ENCODE measurements at regions of chr5 and their contacts with region 1.

Region 1: DNA sequence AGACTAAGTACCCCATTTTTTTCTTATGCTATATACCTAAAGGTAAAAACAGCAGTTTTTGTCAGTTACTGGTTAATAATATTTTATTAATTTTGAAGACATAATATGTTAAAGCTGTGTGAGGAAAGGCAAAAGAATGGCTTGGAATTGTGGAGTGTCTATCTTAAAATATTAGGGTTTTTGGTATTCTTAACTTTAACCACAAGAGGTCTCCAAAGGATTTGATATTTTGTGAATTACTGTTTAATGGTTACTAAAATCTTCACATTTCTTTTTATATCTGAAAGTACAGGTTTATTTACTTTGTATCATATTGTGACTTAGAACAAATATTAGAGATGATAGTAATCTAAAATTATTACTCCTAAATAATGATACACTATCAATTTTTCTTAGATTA is 32.0 kb upstream of the DHFR start:
- DNase-seq: peak; percentile 40
- ATAC-seq: no peak
- H3K4me3 ChIP-seq: no peak overlapping the region
- H3K27ac ChIP-seq: no peak overlapping the region
- H3K4me1 ChIP-seq: no peaks in the 10 kb centered on the region
- H3K27me3 ChIP-seq: no peaks in the 10 kb centered on the region
- CTCF ChIP-seq: peak; percentile 40

Region 2: GRCh38 chr5:80782626-80783025 is 95.9 kb after region 1 on chr5:
- CTCF ChIA-PET with region 1: no interaction called
- POLR2A ChIA-PET with region 1: no interaction called
- intact Hi-C with region 1: no loop called
- DNase-seq: no peak
- ATAC-seq: no peak
- H3K4me3 ChIP-seq: no peak overlapping the region
- H3K27ac ChIP-seq: no peak overlapping the region
- H3K4me1 ChIP-seq: peaks cover 10% of the 10 kb centered on the region
- H3K27me3 ChIP-seq: no peaks in the 10 kb centered on the region
- CTCF ChIP-seq: no peak

Region 3: DNA sequence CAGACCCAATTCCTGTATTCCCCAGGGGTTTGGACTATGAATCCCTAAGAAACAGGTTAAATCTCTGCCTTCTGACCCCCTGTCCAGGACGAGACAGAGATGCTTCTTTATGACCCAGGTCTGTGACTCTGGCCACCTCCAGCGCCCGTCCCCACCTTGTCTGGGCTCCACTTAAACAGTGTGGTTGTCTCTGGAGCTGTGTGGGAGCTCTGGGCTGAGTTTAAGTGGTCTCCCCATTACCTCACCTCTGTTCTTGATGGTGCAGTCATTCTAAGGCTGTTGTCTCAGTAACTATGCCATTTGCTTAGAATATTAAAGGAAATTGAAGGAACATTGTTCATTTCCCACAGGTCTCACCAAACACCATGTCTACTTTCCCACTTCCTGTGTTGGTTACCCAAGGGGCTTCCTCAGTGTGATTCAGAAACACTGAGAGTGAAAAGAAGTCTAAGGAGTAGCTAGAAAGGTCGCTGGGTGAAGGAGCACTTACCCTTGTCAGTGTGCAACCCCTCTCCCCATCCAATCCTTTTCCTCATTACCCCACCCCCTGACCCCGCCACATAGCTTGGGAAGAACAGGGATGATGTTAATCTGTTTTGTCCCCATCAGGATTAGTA is 418.6 kb after region 1 on chr5:
- CTCF ChIA-PET with region 1: no interaction called
- POLR2A ChIA-PET with region 1: no interaction called
- intact Hi-C with region 1: loop called (anchors 2 kb)
- DNase-seq: no peak
- ATAC-seq: no peak
- H3K4me3 ChIP-seq: no peak overlapping the region
- H3K27ac ChIP-seq: no peak overlapping the region
- H3K4me1 ChIP-seq: no peaks in the 10 kb centered on the region
- H3K27me3 ChIP-seq: peaks cover 8% of the 10 kb centered on the region; the same call in 1 of the 2 replicates
- CTCF ChIP-seq: no peak

Region 4: DNA sequence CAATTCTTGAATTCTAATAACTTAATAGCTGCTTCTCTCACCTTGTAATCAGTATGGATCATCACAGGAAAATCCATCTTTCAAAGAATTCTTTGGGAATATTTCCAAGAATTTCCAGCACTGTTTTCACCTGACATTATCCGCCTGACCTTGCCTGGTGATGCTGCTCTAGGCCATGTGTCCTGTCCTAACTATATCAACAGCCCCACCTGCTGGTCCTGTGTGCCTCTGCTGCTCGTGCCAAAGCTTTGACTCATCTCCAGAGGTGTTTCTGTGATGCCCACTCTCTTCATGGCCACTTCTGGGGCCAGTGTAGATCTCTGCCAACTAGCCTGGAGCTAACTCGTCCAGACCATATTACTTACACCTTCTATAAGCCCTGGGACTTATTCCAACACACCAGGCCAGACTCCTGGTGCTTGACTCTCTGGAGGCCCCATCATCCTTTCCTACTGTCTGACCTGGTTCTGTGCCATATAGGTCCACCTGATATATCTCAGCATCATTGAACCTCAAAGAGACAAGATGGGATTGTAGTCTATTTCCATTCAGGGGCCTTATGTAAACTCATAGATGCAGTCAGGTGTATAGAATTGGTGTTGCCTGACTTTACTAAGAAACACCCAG is 478.8 kb after region 1 on chr5:
- CTCF ChIA-PET with region 1: no interaction called
- POLR2A ChIA-PET with region 1: no interaction called
- intact Hi-C with region 1: loop called (anchors 2 kb)
- DNase-seq: peak; percentile 75
- ATAC-seq: peak; percentile 98
- H3K4me3 ChIP-seq: no peak overlapping the region
- H3K27ac ChIP-seq: no peak overlapping the region
- H3K4me1 ChIP-seq: no peaks in the 10 kb centered on the region
- H3K27me3 ChIP-seq: no peaks in the 10 kb centered on the region
- CTCF ChIP-seq: peak; percentile 81

Region 5: DNA sequence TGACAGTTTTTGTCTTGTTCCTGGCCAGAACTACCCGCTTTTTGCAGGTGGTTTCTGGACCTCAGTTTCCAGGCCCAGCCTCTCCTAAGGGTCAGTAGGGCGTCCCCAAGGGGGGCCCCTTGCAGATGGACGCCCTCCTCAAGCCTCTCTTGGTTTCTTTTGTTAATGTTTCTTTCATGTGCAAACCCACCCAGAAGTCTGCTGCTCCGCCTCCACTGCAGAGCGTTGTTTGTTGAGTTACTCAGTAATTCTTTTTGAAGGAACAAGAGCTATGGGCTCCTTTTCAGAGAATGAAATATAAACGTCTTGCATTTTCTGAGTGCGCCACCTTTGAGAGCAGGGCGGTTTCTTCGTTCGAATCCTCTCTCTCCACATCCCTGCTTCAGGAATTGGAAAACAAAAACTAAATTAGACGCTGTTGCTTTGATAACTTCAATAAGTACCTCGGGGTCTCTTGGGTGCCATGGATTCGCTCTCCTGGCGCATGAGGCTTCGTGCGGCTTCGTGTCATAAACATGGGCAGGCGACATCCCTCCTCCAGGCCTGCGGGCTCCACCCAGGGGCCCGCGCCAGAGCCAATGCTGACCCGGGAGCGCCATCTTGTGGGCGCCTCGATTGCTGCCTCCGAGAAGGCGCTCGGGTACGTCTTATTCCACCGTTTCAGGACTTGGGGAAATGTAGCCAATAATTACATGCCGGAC is 508.0 kb after region 1 on chr5:
- CTCF ChIA-PET with region 1: no interaction called
- POLR2A ChIA-PET with region 1: no interaction called
- intact Hi-C with region 1: loop called (anchors 1 kb)
- DNase-seq: peak; percentile 80
- ATAC-seq: peak; percentile 99
- H3K4me3 ChIP-seq: no peak overlapping the region
- H3K27ac ChIP-seq: no peak overlapping the region
- H3K4me1 ChIP-seq: no peaks in the 10 kb centered on the region
- H3K27me3 ChIP-seq: 0 out of 2 replicates have a peak, but pooled peaks cover 3% of the 10 kb centered on the region
- CTCF ChIP-seq: peak; percentile 91

Region 6: GRCh38 chr5:81288021-81288433 is 601.3 kb after region 1 on chr5:
- CTCF ChIA-PET with region 1: no interaction called
- POLR2A ChIA-PET with region 1: no interaction called
- intact Hi-C with region 1: loop called (anchors 10 kb)
- DNase-seq: no peak
- ATAC-seq: no peak
- H3K4me3 ChIP-seq: no peak overlapping the region
- H3K27ac ChIP-seq: no peak overlapping the region
- H3K4me1 ChIP-seq: no peaks in the 10 kb centered on the region
- H3K27me3 ChIP-seq: no peaks in the 10 kb centered on the region
- CTCF ChIP-seq: no peak

Measured in PC-3 (cell line).